Testis (tissue), 5 donors: ENCODE measurements at regions of chr13 and their contacts with region 1.

Region 1: GRCh38 chr13:44435142-44435982 is 61.7 kb downstream of the SERP2 start:
- DNase-seq: peak; percentile 99
- H3K4me3 ChIP-seq: peak overlapping the region; percentile 70 to 76
- H3K27ac ChIP-seq: peak overlapping the region; percentile 95 to 97
- H3K4me1 ChIP-seq: peaks cover 28% of the 10 kb centered on the region
- H3K27me3 ChIP-seq: no peaks in the 10 kb centered on the region
- CTCF ChIP-seq: no peak
- POLR2A ChIP-seq: peak; percentile 97

Region 2: DNA sequence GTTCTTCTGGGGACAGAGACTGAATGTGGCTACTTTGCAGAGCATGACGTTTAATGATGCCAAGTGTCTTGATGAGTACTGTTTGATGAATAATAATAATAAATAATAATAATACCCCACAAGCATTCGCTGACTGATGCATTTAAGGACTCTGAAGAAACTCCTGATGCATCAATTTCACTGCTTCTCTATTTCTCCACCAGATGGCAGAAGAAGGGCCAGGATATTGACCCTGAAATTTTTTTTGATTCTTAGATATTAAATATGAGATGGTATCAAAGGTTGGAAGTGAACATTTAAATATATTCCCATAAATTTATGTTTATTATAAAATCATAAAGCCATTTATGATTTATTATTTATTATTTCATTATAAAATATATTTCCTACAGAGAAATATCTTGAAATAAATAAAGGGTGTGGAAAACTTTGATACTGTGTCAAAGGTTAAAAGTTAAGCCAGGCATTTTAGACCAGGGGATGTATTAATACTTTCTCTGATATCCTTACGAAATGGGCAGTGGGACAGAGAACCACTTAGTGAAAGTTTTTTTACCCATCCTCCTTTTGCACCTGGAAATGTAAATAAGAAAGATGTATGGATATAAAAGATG is 384.8 kb before region 1 on chr13:
- intact Hi-C with region 1: loop called (anchors 10 kb)
- DNase-seq: no peak
- H3K4me3 ChIP-seq: no peak overlapping the region
- H3K27ac ChIP-seq: no peak overlapping the region
- H3K4me1 ChIP-seq: peaks cover 19% of the 10 kb centered on the region
- H3K27me3 ChIP-seq: no peaks in the 10 kb centered on the region
- CTCF ChIP-seq: peak; percentile 66 to 83 (median 74)
- POLR2A ChIP-seq: no peak

Region 3: GRCh38 chr13:44141725-44142539 is 293.4 kb before region 1 on chr13:
- intact Hi-C with region 1: loop called (anchors 10 kb)
- DNase-seq: peak; percentile 97
- H3K4me3 ChIP-seq: peak overlapping the region; percentile 67 to 73
- H3K27ac ChIP-seq: peak overlapping the region; percentile 93 to 97
- H3K4me1 ChIP-seq: peaks cover 19% of the 10 kb centered on the region
- H3K27me3 ChIP-seq: no peaks in the 10 kb centered on the region
- CTCF ChIP-seq: peak in 1 of 3 experiments; percentile 29
- POLR2A ChIP-seq: peak; percentile 94

Region 4: GRCh38 chr13:44219577-44220548 is 215.5 kb before region 1 on chr13:
- intact Hi-C with region 1: loop called (anchors 10 kb)
- DNase-seq: no peak
- H3K4me3 ChIP-seq: no peak overlapping the region
- H3K27ac ChIP-seq: peak overlapping the region in 1 of 2 donors; percentile 42
- H3K4me1 ChIP-seq: peaks cover 11% of the 10 kb centered on the region
- H3K27me3 ChIP-seq: no peaks in the 10 kb centered on the region
- CTCF ChIP-seq: no peak
- POLR2A ChIP-seq: no peak

Region 5: DNA sequence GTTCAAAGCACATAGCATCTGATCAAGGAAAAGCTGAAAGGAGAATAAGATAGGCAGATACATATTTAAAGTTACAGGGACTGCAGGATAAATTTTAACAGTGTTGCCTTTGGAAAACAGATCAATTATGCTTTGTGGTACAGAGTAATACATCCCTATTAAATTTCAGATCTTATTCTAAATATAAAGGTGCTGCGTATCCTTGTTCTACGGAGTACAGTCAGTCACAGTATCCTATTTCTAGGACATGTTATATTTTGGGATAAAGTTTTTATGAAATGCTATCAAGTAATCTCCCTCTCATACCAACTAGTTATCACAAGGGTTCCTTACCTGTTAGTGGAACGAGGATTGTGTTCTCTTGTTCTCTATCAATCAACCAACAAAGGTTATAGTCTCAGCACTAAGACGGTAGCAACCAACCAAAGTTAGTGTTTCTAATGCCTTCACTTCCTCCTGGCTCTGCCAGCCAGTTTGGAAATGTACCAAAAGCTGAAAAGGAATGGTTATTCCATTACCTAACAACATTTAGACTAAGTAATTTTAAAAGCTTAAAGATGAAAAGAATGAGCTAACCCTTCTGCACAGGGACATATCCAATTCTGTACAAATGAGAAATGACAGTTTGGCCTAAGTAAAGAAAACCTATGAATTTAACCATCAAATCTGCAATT is 105.5 kb after region 1 on chr13:
- intact Hi-C with region 1: no loop called
- DNase-seq: no peak
- H3K4me3 ChIP-seq: no peak overlapping the region
- H3K27ac ChIP-seq: no peak overlapping the region
- H3K4me1 ChIP-seq: no peaks in the 10 kb centered on the region
- H3K27me3 ChIP-seq: no peaks in the 10 kb centered on the region
- CTCF ChIP-seq: no peak
- POLR2A ChIP-seq: no peak